ENCODE measurements at regions of chr5 and their contacts with region 1.

Region 1: GRCh38 chr5:31825518-31826068 is 186.7 kb downstream of the PDZD2 start:
- DNase-seq: peak in 1 of 2 donors; percentile 34
- H3K4me3 ChIP-seq: no peak overlapping the region
- CTCF ChIP-seq: no peak
- POLR2A ChIP-seq: no peak

Region 2: GRCh38 chr5:32076699-32077695 is 251.4 kb after region 1 on chr5:
- intact Hi-C with region 1: loop called (anchors 10 kb)
- DNase-seq: peak in 1 of 2 donors; percentile 48
- H3K4me3 ChIP-seq: no peak overlapping the region
- CTCF ChIP-seq: no peak
- POLR2A ChIP-seq: no peak